H1 (cell line): ENCODE measurements at regions of chr6 and their contacts with region 1.

Region 1: GRCh38 chr6:54992789-54993188 is 146.2 kb downstream of the FAM83B start:
- DNase-seq: no peak
- H3K4me3 ChIP-seq: no peak overlapping the region
- H3K27ac ChIP-seq: no peak overlapping the region
- H3K4me1 ChIP-seq: no peaks in the 10 kb centered on the region
- H3K27me3 ChIP-seq: no peaks in the 10 kb centered on the region
- CTCF ChIP-seq: peak in 2 of 3 experiments; percentile 51 to 70; a peak in 3 of 4 replicates
- EP300 ChIP-seq: no peak
- POLR2A ChIP-seq: no peak
- RAD21 ChIP-seq: peak; percentile 76 to 77

Region 2: GRCh38 chr6:54981647-54982046 is 11.1 kb before region 1 on chr6:
- CTCF ChIA-PET with region 1: interaction called, 12 read pairs
- POLR2A ChIA-PET with region 1: no interaction called
- DNase-seq: no peak
- H3K4me3 ChIP-seq: no peak overlapping the region
- H3K27ac ChIP-seq: no peak overlapping the region
- H3K4me1 ChIP-seq: no peaks in the 10 kb centered on the region
- H3K27me3 ChIP-seq: no peaks in the 10 kb centered on the region
- CTCF ChIP-seq: no peak
- EP300 ChIP-seq: no peak
- POLR2A ChIP-seq: no peak
- RAD21 ChIP-seq: no peak

Region 3: DNA sequence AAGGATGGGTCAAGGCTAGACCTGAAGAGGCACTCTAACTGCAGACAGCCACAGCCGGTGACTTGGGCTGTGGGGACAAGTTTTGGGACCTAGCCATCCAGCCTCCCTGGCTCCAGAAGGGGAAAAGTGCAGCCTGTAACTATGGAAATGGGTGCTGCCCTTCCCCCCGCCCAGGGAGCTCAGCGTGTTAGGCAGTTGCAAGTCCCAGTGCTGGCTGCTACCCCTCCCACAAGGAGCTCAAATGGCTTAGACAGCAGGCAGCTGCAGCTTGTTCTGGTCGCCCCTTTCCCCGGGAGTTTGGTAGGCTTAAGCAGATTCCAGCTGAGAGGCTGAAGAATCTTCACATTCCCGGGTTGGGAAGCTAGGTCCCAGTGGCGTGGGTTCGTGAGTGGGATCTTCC is 16.3 kb after region 1 on chr6:
- CTCF ChIA-PET with region 1: interaction called, 13 read pairs
- POLR2A ChIA-PET with region 1: no interaction called
- DNase-seq: no peak
- H3K4me3 ChIP-seq: no peak overlapping the region
- H3K27ac ChIP-seq: no peak overlapping the region
- H3K4me1 ChIP-seq: peaks cover 0 to 6% (median 0%) of the 10 kb centered on the region in 4 experiments; a peak in 1 of 7 replicates
- H3K27me3 ChIP-seq: no peaks in the 10 kb centered on the region
- CTCF ChIP-seq: no peak
- EP300 ChIP-seq: no peak
- POLR2A ChIP-seq: no peak
- RAD21 ChIP-seq: no peak

Region 4: DNA sequence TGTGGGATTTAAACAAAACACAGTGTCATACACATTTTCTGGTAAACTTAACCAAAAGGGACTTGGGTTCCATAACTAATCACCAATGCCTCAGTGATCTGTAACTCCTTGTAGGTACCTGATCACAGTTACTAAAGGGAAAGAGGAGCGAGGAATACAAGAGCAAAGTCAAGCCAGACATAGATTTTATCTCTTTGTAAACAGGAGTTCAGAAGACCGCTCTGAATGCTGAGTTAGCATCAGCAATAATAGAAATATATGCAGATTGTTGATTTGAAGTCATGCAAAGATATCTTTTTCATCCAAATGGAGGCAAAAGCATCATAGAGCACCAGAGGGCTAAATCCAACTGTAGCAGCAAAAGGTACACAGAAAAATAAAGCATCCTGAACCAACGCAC is 195.4 kb after region 1 on chr6:
- CTCF ChIA-PET with region 1: no interaction called
- POLR2A ChIA-PET with region 1: no interaction called
- DNase-seq: no peak
- H3K4me3 ChIP-seq: no peak overlapping the region
- H3K27ac ChIP-seq: no peak overlapping the region
- H3K4me1 ChIP-seq: no peaks in the 10 kb centered on the region
- H3K27me3 ChIP-seq: no peaks in the 10 kb centered on the region
- CTCF ChIP-seq: no peak
- EP300 ChIP-seq: no peak
- POLR2A ChIP-seq: no peak
- RAD21 ChIP-seq: no peak